ENCODE measurements at regions of chr6 and their contacts with region 1.

Region 1: GRCh38 chr6:26270903-26271667 is 93.9 kb upstream of the BTN3A2 start:
- DNase-seq: no peak
- ATAC-seq: no peak
- H3K4me3 ChIP-seq: no peak overlapping the region
- H3K27ac ChIP-seq: no peak overlapping the region
- H3K4me1 ChIP-seq: peaks cover 0 to 5% of the 10 kb centered on the region in 2 experiments; a peak in 3 of 5 replicates
- H3K27me3 ChIP-seq: no peaks in the 10 kb centered on the region
- CTCF ChIP-seq: no peak
- EP300 ChIP-seq: no peak
- POLR2A ChIP-seq: no peak
- RAD21 ChIP-seq: no peak

Region 2: GRCh38 chr6:26129656-26130055 is 141.4 kb before region 1 on chr6:
- CTCF ChIA-PET with region 1: no interaction called
- POLR2A ChIA-PET with region 1: no interaction called
- in situ Hi-C with region 1: no loop called
- intact Hi-C with region 1: no loop called
- DNase-seq: no peak
- ATAC-seq: no peak
- H3K4me3 ChIP-seq: no peak overlapping the region
- H3K27ac ChIP-seq: no peak overlapping the region
- H3K4me1 ChIP-seq: peaks cover 3 to 32% of the 10 kb centered on the region in 2 experiments; a peak in 3 of 5 replicates
- H3K27me3 ChIP-seq: no peaks in the 10 kb centered on the region
- CTCF ChIP-seq: no peak
- EP300 ChIP-seq: no peak
- POLR2A ChIP-seq: no peak
- RAD21 ChIP-seq: no peak

Region 3: DNA sequence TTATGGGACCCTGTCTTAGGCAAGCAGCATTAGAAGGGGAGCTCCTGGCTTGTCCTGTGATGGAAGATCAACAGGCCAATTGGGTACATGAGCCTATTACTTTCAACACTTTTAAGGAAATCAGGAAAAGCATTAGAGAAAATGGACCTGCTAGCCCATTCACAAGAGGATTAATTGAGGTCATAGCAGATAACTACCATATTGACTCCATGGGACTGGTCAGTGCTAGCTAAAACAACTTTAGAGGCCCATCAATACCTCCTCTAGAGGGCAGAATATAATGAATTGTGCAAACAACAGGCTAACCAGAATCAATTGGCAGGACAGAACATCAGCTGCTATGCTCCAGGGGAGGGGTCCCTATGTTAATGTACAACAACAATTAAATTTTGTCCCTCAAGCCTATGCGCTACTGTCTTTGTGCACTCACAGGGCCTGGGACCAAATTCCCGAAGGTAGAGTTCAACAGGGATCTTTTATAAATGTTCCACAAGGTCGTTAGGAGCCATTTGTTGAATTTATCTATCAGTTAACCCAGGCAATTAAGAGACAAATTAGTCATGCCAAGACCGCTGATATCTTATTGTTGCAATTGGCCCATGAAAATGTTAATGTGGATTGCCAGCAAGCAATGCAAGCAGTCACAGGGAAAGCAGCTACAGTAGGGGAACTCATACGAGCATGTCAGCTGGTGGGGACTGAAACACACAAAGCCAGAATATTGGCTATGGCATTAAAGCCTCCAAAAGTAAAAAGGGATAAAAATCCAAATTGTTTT is 12.7 kb before region 1 on chr6:
- CTCF ChIA-PET with region 1: no interaction called
- POLR2A ChIA-PET with region 1: interaction called, 15 read pairs
- in situ Hi-C with region 1: no loop called
- intact Hi-C with region 1: no loop called
- DNase-seq: peak in 3 of 4 experiments; percentile 48 to 51 (median 49)
- ATAC-seq: peak; percentile 77
- H3K4me3 ChIP-seq: no peak overlapping the region
- H3K27ac ChIP-seq: no peak overlapping the region
- H3K4me1 ChIP-seq: peaks cover 3 to 11% of the 10 kb centered on the region in 2 experiments; a peak in 3 of 5 replicates
- H3K27me3 ChIP-seq: no peaks in the 10 kb centered on the region
- CTCF ChIP-seq: peak; percentile 41 to 66 (median 56); a peak in 5 of 6 replicates
- EP300 ChIP-seq: no peak
- POLR2A ChIP-seq: no peak
- RAD21 ChIP-seq: peak; percentile 18 to 57; a peak in 2 of 4 replicates

Region 4: DNA sequence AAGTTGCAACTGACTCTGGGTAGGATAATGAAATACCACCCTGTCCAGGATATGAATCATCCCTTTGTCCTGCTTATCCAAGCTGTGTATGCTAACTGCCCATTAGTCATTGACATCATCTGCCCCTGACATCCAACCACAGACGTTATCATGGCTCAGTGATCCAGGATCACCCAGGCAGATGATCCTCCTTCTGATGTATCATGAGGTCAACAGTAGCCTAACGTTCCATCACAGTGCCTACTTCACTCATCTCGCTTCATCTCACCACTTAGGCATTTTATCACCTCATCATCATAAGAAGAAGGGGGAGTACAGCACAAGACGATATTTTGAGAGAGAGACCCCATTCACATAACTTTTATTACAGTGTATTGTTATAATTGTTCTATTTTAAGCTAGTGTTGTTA is 80.5 kb after region 1 on chr6:
- CTCF ChIA-PET with region 1: no interaction called
- POLR2A ChIA-PET with region 1: no interaction called
- in situ Hi-C with region 1: no loop called
- intact Hi-C with region 1: no loop called
- DNase-seq: peak; percentile 52 to 88 (median 62)
- ATAC-seq: peak; percentile 59
- H3K4me3 ChIP-seq: no peak overlapping the region
- H3K27ac ChIP-seq: peak overlapping the region; percentile 80
- H3K4me1 ChIP-seq: peaks cover 10 to 66% of the 10 kb centered on the region in 2 experiments
- H3K27me3 ChIP-seq: no peaks in the 10 kb centered on the region
- CTCF ChIP-seq: no peak
- EP300 ChIP-seq: peak; percentile 95
- POLR2A ChIP-seq: no peak
- RAD21 ChIP-seq: no peak

Measured in K562 (cell line).